ENCODE measurements at regions of chr4 and their contacts with region 1.

Region 1: GRCh38 chr4:38319456-38320342 is 344.3 kb upstream of the KLF3 start:
- DNase-seq: peak; percentile 79 to 92
- H3K4me3 ChIP-seq: peak overlapping the region; percentile 10; the same call in 1 of the 2 replicates
- H3K27ac ChIP-seq: peak overlapping the region; percentile 76
- H3K4me1 ChIP-seq: peaks cover 27% of the 10 kb centered on the region
- H3K27me3 ChIP-seq: no peaks in the 10 kb centered on the region
- CTCF ChIP-seq: peak; percentile 98

Region 2: GRCh38 chr4:38034986-38035882 is 284.5 kb before region 1 on chr4:
- CTCF ChIA-PET with region 1: interaction called, 11 read pairs
- POLR2A ChIA-PET with region 1: no interaction called
- intact Hi-C with region 1: no loop called
- DNase-seq: peak; percentile 10 to 48
- H3K4me3 ChIP-seq: no peak overlapping the region
- H3K27ac ChIP-seq: no peak overlapping the region
- H3K4me1 ChIP-seq: no peaks in the 10 kb centered on the region
- H3K27me3 ChIP-seq: no peaks in the 10 kb centered on the region
- CTCF ChIP-seq: peak; percentile 85

Region 3: GRCh38 chr4:38179690-38180377 is 139.9 kb before region 1 on chr4:
- CTCF ChIA-PET with region 1: interaction called, 13 read pairs
- POLR2A ChIA-PET with region 1: no interaction called
- intact Hi-C with region 1: loop called (anchors 1 kb)
- DNase-seq: peak; percentile 82
- H3K4me3 ChIP-seq: no peak overlapping the region
- H3K27ac ChIP-seq: peak overlapping the region; percentile 86
- H3K4me1 ChIP-seq: peaks cover 30% of the 10 kb centered on the region
- H3K27me3 ChIP-seq: no peaks in the 10 kb centered on the region
- CTCF ChIP-seq: peak; percentile 98

Region 4: GRCh38 chr4:38255572-38255971 is 64.1 kb before region 1 on chr4:
- CTCF ChIA-PET with region 1: no interaction called
- POLR2A ChIA-PET with region 1: no interaction called
- intact Hi-C with region 1: no loop called
- DNase-seq: no peak
- H3K4me3 ChIP-seq: no peak overlapping the region
- H3K27ac ChIP-seq: no peak overlapping the region
- H3K4me1 ChIP-seq: peaks cover 6% of the 10 kb centered on the region; the same call in 1 of the 2 replicates
- H3K27me3 ChIP-seq: no peaks in the 10 kb centered on the region
- CTCF ChIP-seq: no peak

Region 5: GRCh38 chr4:38275331-38276100 is 44.2 kb before region 1 on chr4:
- CTCF ChIA-PET with region 1: interaction called, 14 read pairs
- POLR2A ChIA-PET with region 1: no interaction called
- intact Hi-C with region 1: loop called (anchors 1 kb)
- DNase-seq: peak; percentile 80 to 99
- H3K4me3 ChIP-seq: no peak overlapping the region
- H3K27ac ChIP-seq: peak overlapping the region; percentile 79
- H3K4me1 ChIP-seq: peaks cover 33% of the 10 kb centered on the region
- H3K27me3 ChIP-seq: no peaks in the 10 kb centered on the region
- CTCF ChIP-seq: no peak

Region 6: GRCh38 chr4:38601898-38602254 is 282.2 kb after region 1 on chr4:
- CTCF ChIA-PET with region 1: interaction called, 14 read pairs
- POLR2A ChIA-PET with region 1: no interaction called
- intact Hi-C with region 1: no loop called
- DNase-seq: no peak
- H3K4me3 ChIP-seq: no peak overlapping the region
- H3K27ac ChIP-seq: 0 out of 2 replicates have a peak overlapping the region, but pooled peaks have one; percentile 17
- H3K4me1 ChIP-seq: peaks cover 26% of the 10 kb centered on the region
- H3K27me3 ChIP-seq: no peaks in the 10 kb centered on the region
- CTCF ChIP-seq: no peak

Region 7: GRCh38 chr4:38730830-38731646 is 411.3 kb after region 1 on chr4:
- CTCF ChIA-PET with region 1: interaction called, 11 read pairs
- POLR2A ChIA-PET with region 1: interaction called, 8 read pairs
- intact Hi-C with region 1: loop called (anchors 1 kb)
- DNase-seq: peak; percentile 74 to 87
- H3K4me3 ChIP-seq: no peak overlapping the region
- H3K27ac ChIP-seq: peak overlapping the region; percentile 13; the same call in 1 of the 2 replicates
- H3K4me1 ChIP-seq: peaks cover 35% of the 10 kb centered on the region
- H3K27me3 ChIP-seq: no peaks in the 10 kb centered on the region
- CTCF ChIP-seq: peak; percentile 94

Region 8: GRCh38 chr4:39227906-39228305 is 908.2 kb after region 1 on chr4:
- CTCF ChIA-PET with region 1: no interaction called
- POLR2A ChIA-PET with region 1: no interaction called
- intact Hi-C with region 1: no loop called
- DNase-seq: no peak
- H3K4me3 ChIP-seq: no peak overlapping the region
- H3K27ac ChIP-seq: no peak overlapping the region
- H3K4me1 ChIP-seq: no peaks in the 10 kb centered on the region
- H3K27me3 ChIP-seq: no peaks in the 10 kb centered on the region
- CTCF ChIP-seq: no peak